HCT116 (cell line): ENCODE measurements at regions of chr9 and their contacts with region 1.

Region 1: DNA sequence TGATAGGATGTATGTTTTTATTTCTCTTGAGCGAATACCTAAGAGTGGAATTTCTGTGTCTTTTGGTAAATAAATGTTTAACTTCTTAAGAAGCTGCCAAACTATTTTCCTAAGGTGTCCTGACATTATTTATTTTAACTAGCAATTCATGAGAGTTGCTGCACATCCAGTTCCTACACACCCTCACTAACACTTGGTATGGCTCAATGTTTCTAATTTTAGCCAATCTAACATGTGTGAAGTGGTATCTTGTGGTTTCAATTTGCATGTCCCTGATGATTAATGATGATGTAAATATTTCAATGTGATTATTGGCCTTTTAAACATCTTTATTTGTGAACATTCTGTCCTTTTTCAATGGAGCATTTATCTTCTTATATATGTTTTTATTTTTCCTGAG is 2095.5 kb upstream of the C9orf72 start:
- DNase-seq: no peak
- ATAC-seq: no peak
- H3K4me3 ChIP-seq: no peak overlapping the region
- H3K27ac ChIP-seq: no peak overlapping the region
- H3K4me1 ChIP-seq: no peaks in the 10 kb centered on the region
- H3K27me3 ChIP-seq: no peaks in the 10 kb centered on the region
- CTCF ChIP-seq: no peak
- POLR2A ChIP-seq: no peak
- RAD21 ChIP-seq: no peak

Region 2: GRCh38 chr9:28999810-29000209 is 668.9 kb before region 1 on chr9:
- CTCF ChIA-PET with region 1: no interaction called
- POLR2A ChIA-PET with region 1: no interaction called
- RAD21 ChIA-PET with region 1: no interaction called
- intact Hi-C with region 1: no loop called
- DNase-seq: no peak
- ATAC-seq: no peak
- H3K4me3 ChIP-seq: no peak overlapping the region
- H3K27ac ChIP-seq: no peak overlapping the region
- H3K4me1 ChIP-seq: no peaks in the 10 kb centered on the region
- H3K27me3 ChIP-seq: no peaks in the 10 kb centered on the region
- CTCF ChIP-seq: no peak
- POLR2A ChIP-seq: no peak
- RAD21 ChIP-seq: no peak

Region 3: DNA sequence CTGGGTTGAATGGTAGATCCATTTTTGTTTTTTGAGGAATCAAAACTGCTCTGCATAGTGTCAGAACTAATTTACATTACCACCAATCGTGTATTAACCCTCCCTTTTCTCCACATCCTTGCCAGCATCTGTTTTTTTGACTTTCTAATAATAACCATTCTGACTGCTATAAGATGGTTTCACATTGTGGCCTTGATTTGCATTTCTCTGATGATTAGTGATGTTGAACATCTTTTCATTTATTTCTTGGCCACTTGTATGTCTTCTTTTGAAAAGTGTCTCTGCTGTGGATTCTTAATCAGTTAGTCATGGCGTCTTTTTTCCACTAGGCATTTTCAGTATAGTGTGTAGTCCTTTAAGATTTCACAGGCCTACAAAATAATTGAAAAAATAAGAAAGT is 48.9 kb after region 1 on chr9:
- CTCF ChIA-PET with region 1: no interaction called
- POLR2A ChIA-PET with region 1: no interaction called
- RAD21 ChIA-PET with region 1: no interaction called
- intact Hi-C with region 1: loop called (anchors 5 kb)
- DNase-seq: no peak
- ATAC-seq: no peak
- H3K4me3 ChIP-seq: no peak overlapping the region
- H3K27ac ChIP-seq: no peak overlapping the region
- H3K4me1 ChIP-seq: no peaks in the 10 kb centered on the region
- H3K27me3 ChIP-seq: no peaks in the 10 kb centered on the region
- CTCF ChIP-seq: no peak
- POLR2A ChIP-seq: no peak
- RAD21 ChIP-seq: no peak